ENCODE measurements at regions of chr12 and their contacts with region 1.

Region 1: DNA sequence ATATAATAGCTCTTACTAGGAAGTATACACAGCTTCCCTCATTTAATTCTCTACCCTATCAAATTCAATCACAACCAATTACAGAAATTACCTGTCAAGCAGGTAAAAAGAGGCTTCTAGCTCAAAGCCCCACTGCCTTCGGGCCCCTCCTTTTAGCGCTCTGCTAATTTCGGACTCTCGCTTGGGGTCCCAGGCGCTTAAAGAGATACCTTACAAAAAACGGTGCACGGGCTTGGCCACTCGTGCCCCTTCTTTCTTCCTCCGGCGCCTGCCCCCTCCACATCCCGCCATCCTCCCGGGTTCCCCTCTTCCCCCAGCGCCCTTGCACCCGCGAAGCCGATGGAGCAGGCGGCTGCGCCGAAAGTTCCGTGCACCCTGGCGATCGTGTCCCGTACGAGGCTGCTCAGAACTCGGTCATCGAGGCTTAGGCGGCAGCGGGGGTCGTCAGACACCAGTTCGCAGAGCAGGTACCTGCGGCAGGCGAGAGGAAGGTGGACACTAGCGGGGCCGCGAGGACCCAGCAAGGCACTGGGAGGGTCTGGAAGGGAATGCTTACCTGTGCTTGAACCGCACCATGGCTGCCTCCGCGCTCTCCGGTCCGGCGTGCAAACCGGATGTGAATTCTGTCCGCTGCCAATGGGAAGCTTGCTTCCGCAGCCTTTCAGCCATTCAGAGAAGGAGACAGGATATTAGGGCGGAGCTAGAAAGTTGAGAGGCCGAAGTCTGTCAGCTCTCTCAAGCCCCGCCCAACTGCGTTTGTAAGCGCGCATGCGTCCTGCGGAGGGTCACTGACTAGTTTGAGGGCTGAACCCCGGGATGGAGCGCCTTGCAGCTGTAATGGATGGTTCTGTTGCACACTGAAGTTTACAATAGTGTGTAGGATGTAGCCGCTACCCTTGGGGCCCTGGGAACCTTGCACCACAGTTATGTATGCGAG is at the start of gene POP5:
- DNase-seq: peak; percentile 96
- ATAC-seq: peak; percentile 97
- H3K4me3 Mint-ChIP-seq: peak within 1 kb of the TSS; percentile 98
- H3K27ac Mint-ChIP-seq: peak within 1 kb of the TSS; percentile 91
- H3K4me1 Mint-ChIP-seq: peaks cover 35% of the 10 kb centered on the region
- H3K27me3 Mint-ChIP-seq: peaks cover 10% of the 10 kb centered on the region
- total RNA-seq, gene POP5: 44.8 to 52.6 TPM

Region 2: DNA sequence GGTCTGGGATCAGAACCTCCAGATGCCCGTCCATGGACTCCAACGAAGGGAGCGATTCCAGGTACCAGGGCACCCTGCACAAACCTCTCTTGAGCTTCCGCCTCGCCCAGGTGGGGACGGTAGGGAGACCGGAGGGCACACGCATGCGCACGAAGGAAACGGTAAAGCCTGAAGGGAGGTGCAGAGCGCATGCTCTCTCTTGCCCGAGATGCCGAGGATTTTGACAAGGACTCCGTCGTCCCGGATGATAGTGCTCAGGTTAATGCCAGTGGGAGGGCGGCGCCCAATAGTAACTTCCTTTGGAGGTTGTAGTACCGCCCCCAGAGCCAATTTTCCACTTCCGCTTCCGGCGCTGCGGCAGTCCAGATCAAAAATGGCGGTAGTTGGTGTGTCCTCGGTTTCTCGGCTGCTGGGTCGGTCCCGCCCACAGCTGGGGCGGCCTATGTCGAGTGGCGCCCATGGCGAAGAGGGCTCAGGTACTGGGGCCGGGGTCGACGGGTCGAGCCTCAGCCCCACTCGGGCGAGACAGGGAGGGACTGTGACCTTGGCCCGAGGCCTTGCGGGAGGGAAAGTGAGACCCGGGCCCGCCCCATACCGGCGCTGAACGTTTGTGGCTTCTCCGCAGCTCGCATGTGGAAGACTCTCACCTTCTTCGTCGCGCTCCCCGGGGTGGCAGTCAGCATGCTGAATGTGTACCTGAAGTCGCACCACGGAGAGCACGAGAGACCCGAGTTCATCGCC is 143.1 kb before region 1 on chr12 and contains the start of gene COX6A1:
- CTCF ChIA-PET with region 1: interaction called, 8 read pairs
- POLR2A ChIA-PET with region 1: interaction called, 3 read pairs
- intact Hi-C with region 1: loop called in 1 of 2 experiments (anchors 1 kb)
- DNase-seq: peak; percentile 99
- ATAC-seq: peak; percentile 97
- H3K4me3 Mint-ChIP-seq: peak within 1 kb of the TSS; percentile 99
- H3K27ac Mint-ChIP-seq: peak within 1 kb of the TSS; percentile 99
- H3K4me1 Mint-ChIP-seq: peaks cover 23% of the 10 kb centered on the region
- H3K27me3 Mint-ChIP-seq: peaks cover 4% of the 10 kb centered on the region
- total RNA-seq, gene COX6A1: 424 to 495 TPM

Region 3: GRCh38 chr12:120495723-120496412 is 85.2 kb before region 1 on chr12 and contains the start of gene DYNLL1:
- CTCF ChIA-PET with region 1: interaction called, 4 read pairs
- POLR2A ChIA-PET with region 1: no interaction called
- intact Hi-C with region 1: loop called in 1 of 2 experiments (anchors 1 kb)
- DNase-seq: peak; percentile 98
- ATAC-seq: peak; percentile 98
- H3K4me3 Mint-ChIP-seq: peak within 1 kb of the TSS; percentile 91
- H3K27ac Mint-ChIP-seq: peak within 1 kb of the TSS; percentile 75
- H3K4me1 Mint-ChIP-seq: peaks cover 31% of the 10 kb centered on the region
- H3K27me3 Mint-ChIP-seq: no peaks in the 10 kb centered on the region
- total RNA-seq, gene DYNLL1: 166 to 169 TPM

Region 4: GRCh38 chr12:120649442-120650232 is 68.6 kb after region 1 on chr12:
- CTCF ChIA-PET with region 1: interaction called, 123 read pairs
- POLR2A ChIA-PET with region 1: interaction called, 8 read pairs
- intact Hi-C with region 1: loop called (anchors 1 kb)
- DNase-seq: peak; percentile 35
- ATAC-seq: peak; percentile 8
- H3K4me3 Mint-ChIP-seq: peak overlapping the region; percentile 37
- H3K27ac Mint-ChIP-seq: no peak overlapping the region
- H3K4me1 Mint-ChIP-seq: peaks cover 15% of the 10 kb centered on the region
- H3K27me3 Mint-ChIP-seq: peaks cover 48% of the 10 kb centered on the region

Region 5: DNA sequence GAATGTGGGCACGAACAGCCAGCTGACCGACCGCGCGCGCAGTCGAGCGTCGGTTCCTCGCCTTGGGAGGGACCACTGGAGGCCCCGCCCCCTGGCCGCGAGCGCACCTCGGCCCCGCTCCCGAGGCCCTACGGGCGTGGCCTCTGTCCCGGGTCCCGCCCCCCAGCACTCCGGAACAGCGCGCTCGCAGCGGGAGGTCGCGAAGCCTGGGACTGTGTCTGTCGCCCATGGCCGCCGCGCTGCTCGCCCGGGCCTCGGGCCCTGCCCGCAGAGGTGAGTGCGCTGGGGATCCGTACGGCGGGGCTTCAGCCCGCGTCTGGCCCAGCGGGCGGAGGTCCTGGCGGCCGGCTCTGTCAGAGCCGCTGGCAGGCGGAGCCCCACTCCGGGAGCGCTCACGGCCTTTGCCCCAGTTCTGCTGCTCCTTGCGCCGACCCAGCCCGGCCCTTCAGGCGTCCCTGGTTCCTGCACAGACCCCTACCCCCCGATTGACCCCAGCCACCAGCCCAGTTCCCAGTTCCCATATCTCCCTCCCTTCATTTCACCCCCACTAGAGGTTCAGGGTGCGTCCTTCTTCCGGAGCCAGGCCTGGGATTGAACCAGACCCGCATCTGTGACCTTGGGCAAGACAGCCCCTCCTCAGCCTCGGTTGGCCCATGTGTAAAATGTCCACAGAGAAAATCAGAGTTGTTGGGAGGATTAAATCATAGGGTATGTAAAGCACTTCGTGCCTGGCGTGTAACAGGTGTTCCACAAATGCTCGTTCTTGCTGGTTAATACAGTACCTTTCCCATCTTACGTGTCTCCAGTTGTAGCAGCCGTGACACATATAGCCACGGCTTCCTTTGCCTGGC is 144.8 kb after region 1 on chr12 and contains the start of gene ACADS:
- CTCF ChIA-PET with region 1: interaction called, 6 read pairs
- POLR2A ChIA-PET with region 1: no interaction called
- intact Hi-C with region 1: loop called (anchors 5 kb)
- DNase-seq: peak; percentile 96
- ATAC-seq: peak; percentile 100
- H3K4me3 Mint-ChIP-seq: peak within 1 kb of the TSS; percentile 78
- H3K27ac Mint-ChIP-seq: peak within 1 kb of the TSS; percentile 64
- H3K4me1 Mint-ChIP-seq: peaks cover 17% of the 10 kb centered on the region
- H3K27me3 Mint-ChIP-seq: no peaks in the 10 kb centered on the region
- total RNA-seq, gene ACADS: 10.1 to 17.4 TPM

Region 6: DNA sequence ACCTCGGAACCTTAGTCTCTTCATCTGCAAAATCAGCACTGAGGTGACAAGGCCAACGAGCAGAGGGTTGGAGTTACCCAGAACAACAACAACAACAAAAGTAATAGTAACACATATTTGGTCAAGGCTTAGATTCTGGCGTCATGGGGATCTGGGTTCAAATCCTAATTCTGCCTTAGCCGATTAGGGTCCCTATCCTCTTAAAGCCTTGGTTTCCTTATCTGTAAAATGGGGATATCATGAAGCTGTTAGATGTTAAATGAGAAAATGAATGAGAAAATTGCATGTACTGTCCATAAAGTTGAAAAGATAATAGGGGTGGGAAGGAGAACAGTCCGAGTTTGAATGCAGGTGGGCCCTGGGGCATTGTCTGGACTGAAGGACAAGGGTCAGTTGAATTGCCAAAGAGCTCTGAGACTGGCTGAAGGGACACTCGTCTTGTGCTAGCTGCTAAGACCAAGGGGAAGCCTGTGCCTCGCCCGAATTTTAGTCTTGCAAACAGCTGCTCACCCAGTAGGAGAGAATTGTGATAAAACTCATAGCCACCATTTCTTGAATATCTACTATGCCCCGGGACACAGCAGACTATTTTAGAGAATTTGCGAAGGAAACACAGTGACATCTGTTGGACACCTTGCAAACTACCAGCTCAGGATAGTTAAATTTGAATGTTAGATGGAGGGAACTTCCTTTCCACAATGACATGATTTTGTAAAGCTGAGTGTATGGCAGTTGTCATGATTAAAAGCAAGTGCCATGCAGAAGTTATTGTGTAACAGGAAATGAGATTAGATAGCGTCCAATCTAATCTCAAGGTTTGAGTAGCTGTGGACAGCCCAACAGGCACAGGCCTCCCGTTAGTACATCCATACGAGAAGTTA is 390.5 kb after region 1 on chr12:
- CTCF ChIA-PET with region 1: interaction called, 20 read pairs
- POLR2A ChIA-PET with region 1: no interaction called
- intact Hi-C with region 1: loop called (anchors 1 to 5 kb)
- DNase-seq: peak; percentile 41
- ATAC-seq: peak; percentile 97
- H3K4me3 Mint-ChIP-seq: no peak overlapping the region
- H3K27ac Mint-ChIP-seq: no peak overlapping the region
- H3K4me1 Mint-ChIP-seq: no peaks in the 10 kb centered on the region
- H3K27me3 Mint-ChIP-seq: no peaks in the 10 kb centered on the region

Region 7: GRCh38 chr12:121110211-121110940 is 529.3 kb after region 1 on chr12:
- CTCF ChIA-PET with region 1: interaction called, 5 read pairs
- POLR2A ChIA-PET with region 1: no interaction called
- intact Hi-C with region 1: loop called in 1 of 2 experiments (anchors 1 kb)
- DNase-seq: peak; percentile 81
- ATAC-seq: peak; percentile 85
- H3K4me3 Mint-ChIP-seq: no peak overlapping the region
- H3K27ac Mint-ChIP-seq: no peak overlapping the region
- H3K4me1 Mint-ChIP-seq: peaks cover 5% of the 10 kb centered on the region
- H3K27me3 Mint-ChIP-seq: no peaks in the 10 kb centered on the region